PC-3 (cell line): ENCODE measurements at regions of chr13 and their contacts with region 1.

Region 1: GRCh38 chr13:75219479-75220237 is 262.3 kb downstream of the TBC1D4 start:
- DNase-seq: peak; percentile 72
- ATAC-seq: peak; percentile 98
- H3K4me3 ChIP-seq: peak overlapping the region; percentile 64
- H3K27ac ChIP-seq: no peak overlapping the region
- H3K4me1 ChIP-seq: peaks cover 11% of the 10 kb centered on the region; the same call in 1 of the 2 replicates
- H3K27me3 ChIP-seq: no peaks in the 10 kb centered on the region
- CTCF ChIP-seq: peak; percentile 89

Region 2: DNA sequence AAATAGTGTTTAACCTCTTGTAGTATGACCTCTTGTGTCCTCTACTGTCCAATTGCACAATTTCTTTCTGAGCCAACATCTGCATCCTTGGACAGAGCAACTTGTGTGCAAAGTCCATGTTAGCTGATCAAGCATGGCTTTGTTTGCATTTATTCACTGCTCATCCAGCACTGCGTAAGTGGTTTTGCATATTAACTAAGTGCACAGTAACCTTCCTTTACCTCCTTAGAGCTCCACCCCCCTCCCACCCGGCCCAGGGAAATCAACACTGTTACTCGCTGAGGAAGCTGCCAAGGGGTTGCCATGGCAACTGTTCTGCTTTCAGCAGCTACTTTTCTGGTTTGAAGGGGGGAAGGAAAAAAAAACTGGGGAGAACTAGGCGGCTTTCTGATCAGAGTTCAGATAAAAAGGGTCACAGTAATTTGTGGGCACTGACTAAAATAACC is 931.9 kb before region 1 on chr13:
- CTCF ChIA-PET with region 1: interaction called, 4 read pairs
- POLR2A ChIA-PET with region 1: no interaction called
- intact Hi-C with region 1: loop called (anchors 10 kb)
- DNase-seq: peak; percentile 40
- ATAC-seq: peak; percentile 23
- H3K4me3 ChIP-seq: no peak overlapping the region
- H3K27ac ChIP-seq: no peak overlapping the region
- H3K4me1 ChIP-seq: peaks cover 22% of the 10 kb centered on the region
- H3K27me3 ChIP-seq: no peaks in the 10 kb centered on the region
- CTCF ChIP-seq: no peak

Region 3: GRCh38 chr13:74443631-74444030 is 776.0 kb before region 1 on chr13:
- CTCF ChIA-PET with region 1: no interaction called
- POLR2A ChIA-PET with region 1: no interaction called
- intact Hi-C with region 1: loop called (anchors 10 kb)
- DNase-seq: peak; percentile 84
- ATAC-seq: peak; percentile 67
- H3K4me3 ChIP-seq: peak overlapping the region; percentile 49
- H3K27ac ChIP-seq: peak overlapping the region; percentile 99
- H3K4me1 ChIP-seq: peaks cover 40% of the 10 kb centered on the region
- H3K27me3 ChIP-seq: no peaks in the 10 kb centered on the region
- CTCF ChIP-seq: no peak

Region 4: DNA sequence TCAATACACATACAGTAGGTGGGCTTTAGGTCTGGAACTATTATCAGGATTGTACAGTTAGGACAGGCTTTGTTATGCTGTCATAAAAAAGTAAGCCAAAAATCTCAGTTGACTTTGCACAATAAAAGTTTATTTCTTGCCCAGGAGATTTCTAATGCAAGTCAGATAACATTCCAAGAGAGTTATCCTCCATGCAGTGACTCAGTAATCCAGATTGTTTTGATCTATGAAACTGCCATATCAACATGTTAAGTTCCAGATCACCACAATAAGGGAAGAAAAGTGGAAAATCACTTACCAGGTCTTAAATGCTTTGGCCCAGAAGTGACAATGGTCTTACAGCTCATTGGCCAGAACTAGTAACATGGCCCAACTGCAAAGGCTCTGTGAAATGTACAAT is 449.3 kb before region 1 on chr13:
- CTCF ChIA-PET with region 1: no interaction called
- POLR2A ChIA-PET with region 1: no interaction called
- intact Hi-C with region 1: loop called (anchors 5 kb)
- DNase-seq: peak; percentile 78
- ATAC-seq: peak; percentile 55
- H3K4me3 ChIP-seq: no peak overlapping the region
- H3K27ac ChIP-seq: peak overlapping the region; percentile 66
- H3K4me1 ChIP-seq: peaks cover 34% of the 10 kb centered on the region
- H3K27me3 ChIP-seq: no peaks in the 10 kb centered on the region
- CTCF ChIP-seq: no peak

Region 5: DNA sequence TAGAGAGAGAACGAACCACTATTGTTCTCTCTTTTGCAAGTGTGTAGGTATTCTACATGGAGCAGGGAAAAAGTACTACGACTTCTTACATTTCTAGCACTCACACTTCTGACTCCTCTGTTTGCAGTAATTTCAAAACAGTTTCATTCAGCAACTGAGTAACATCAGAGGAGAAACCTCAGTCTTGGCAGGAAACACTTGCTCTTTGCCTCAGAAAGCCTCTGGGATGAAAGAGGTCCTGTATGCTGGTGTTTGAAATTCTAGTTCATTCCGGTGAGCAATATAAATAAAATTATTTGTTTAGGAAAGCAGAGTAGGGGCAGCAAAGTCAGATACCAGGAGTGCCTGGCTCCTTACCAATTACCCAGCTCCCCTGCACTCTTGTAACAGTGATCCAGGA is 333.2 kb before region 1 on chr13:
- CTCF ChIA-PET with region 1: interaction called, 4 read pairs
- POLR2A ChIA-PET with region 1: no interaction called
- intact Hi-C with region 1: loop called (anchors 5 kb)
- DNase-seq: peak; percentile 80
- ATAC-seq: peak; percentile 90
- H3K4me3 ChIP-seq: peak overlapping the region; percentile 21; the same call in 1 of the 2 replicates
- H3K27ac ChIP-seq: peak overlapping the region; percentile 88
- H3K4me1 ChIP-seq: peaks cover 33% of the 10 kb centered on the region
- H3K27me3 ChIP-seq: no peaks in the 10 kb centered on the region
- CTCF ChIP-seq: no peak

Region 6: GRCh38 chr13:74987124-74987690 is 232.5 kb before region 1 on chr13:
- CTCF ChIA-PET with region 1: no interaction called
- POLR2A ChIA-PET with region 1: no interaction called
- intact Hi-C with region 1: loop called (anchors 5 kb)
- DNase-seq: peak; percentile 21
- ATAC-seq: peak; percentile 49; the same call in 1 of the 2 replicates
- H3K4me3 ChIP-seq: no peak overlapping the region
- H3K27ac ChIP-seq: no peak overlapping the region
- H3K4me1 ChIP-seq: peaks cover 28% of the 10 kb centered on the region
- H3K27me3 ChIP-seq: no peaks in the 10 kb centered on the region
- CTCF ChIP-seq: no peak